PC-9 (cell line): ENCODE measurements at regions of chr6 and their contacts with region 1.

Region 1: GRCh38 chr6:82040405-82041221 is 206.9 kb downstream of the IBTK start:
- DNase-seq: peak in 1 of 2 experiments; percentile 26
- H3K4me3 ChIP-seq: no peak overlapping the region
- H3K27ac ChIP-seq: no peak overlapping the region
- H3K4me1 ChIP-seq: no peaks in the 10 kb centered on the region
- H3K27me3 ChIP-seq: no peaks in the 10 kb centered on the region
- CTCF ChIP-seq: peak; percentile 75

Region 2: DNA sequence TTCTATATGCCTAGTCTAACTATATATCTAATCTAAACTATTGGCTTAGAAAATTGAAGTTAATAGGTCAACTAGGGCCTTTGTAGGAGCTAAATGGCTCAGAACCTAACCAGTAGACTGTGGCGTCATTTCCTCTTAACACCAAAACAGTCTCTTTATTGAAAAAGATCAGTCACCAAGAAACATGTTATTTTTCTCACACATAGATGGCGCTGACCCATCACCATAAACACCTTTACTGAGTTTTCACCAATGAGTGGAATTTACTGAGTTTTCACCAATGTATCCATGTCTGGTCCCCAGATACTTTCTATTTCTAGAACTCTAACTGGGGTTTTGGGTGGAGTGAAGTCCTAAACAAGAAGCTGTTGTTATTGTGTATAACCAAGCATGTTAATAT is 1298.1 kb before region 1 on chr6:
- CTCF ChIA-PET with region 1: no interaction called
- POLR2A ChIA-PET with region 1: no interaction called
- intact Hi-C with region 1: loop called (anchors 1 kb)
- DNase-seq: no peak
- H3K4me3 ChIP-seq: no peak overlapping the region
- H3K27ac ChIP-seq: no peak overlapping the region
- H3K4me1 ChIP-seq: no peaks in the 10 kb centered on the region
- H3K27me3 ChIP-seq: no peaks in the 10 kb centered on the region
- CTCF ChIP-seq: peak; percentile 56

Region 3: DNA sequence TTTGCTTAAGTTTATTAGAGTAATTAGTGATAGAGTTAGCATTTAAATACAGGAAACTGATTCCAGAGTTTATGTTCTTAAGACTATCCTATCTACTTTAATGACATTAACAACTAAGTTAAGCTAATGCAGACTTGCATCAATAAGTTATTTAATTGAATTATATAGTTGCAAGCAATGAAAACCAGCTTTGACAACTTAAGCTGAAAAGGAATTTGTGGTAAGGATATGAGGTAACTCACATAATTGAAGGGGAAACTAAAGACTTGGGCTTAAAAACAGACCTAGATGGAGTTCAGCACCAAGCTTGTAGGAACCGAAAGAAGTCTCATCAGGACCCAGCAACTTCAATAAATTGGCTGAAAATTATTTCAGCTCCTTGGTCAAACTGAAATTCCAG is 15.3 kb before region 1 on chr6:
- CTCF ChIA-PET with region 1: no interaction called
- POLR2A ChIA-PET with region 1: no interaction called
- intact Hi-C with region 1: no loop called
- DNase-seq: no peak
- H3K4me3 ChIP-seq: no peak overlapping the region
- H3K27ac ChIP-seq: no peak overlapping the region
- H3K4me1 ChIP-seq: peaks cover 18% of the 10 kb centered on the region
- H3K27me3 ChIP-seq: no peaks in the 10 kb centered on the region
- CTCF ChIP-seq: no peak

Region 4: GRCh38 chr6:82085701-82086100 is 45.1 kb after region 1 on chr6:
- CTCF ChIA-PET with region 1: no interaction called
- POLR2A ChIA-PET with region 1: no interaction called
- intact Hi-C with region 1: no loop called
- DNase-seq: no peak
- H3K4me3 ChIP-seq: no peak overlapping the region
- H3K27ac ChIP-seq: no peak overlapping the region
- H3K4me1 ChIP-seq: no peaks in the 10 kb centered on the region
- H3K27me3 ChIP-seq: no peaks in the 10 kb centered on the region
- CTCF ChIP-seq: no peak

Region 5: GRCh38 chr6:82118150-82118562 is 77.5 kb after region 1 on chr6:
- CTCF ChIA-PET with region 1: no interaction called
- POLR2A ChIA-PET with region 1: no interaction called
- intact Hi-C with region 1: no loop called
- DNase-seq: no peak
- H3K4me3 ChIP-seq: no peak overlapping the region
- H3K27ac ChIP-seq: no peak overlapping the region
- H3K4me1 ChIP-seq: no peaks in the 10 kb centered on the region
- H3K27me3 ChIP-seq: no peaks in the 10 kb centered on the region
- CTCF ChIP-seq: no peak